Endothelial cell of umbilical vein (primary cell): ENCODE measurements at regions of chr10 and their contacts with region 1.

Region 1: DNA sequence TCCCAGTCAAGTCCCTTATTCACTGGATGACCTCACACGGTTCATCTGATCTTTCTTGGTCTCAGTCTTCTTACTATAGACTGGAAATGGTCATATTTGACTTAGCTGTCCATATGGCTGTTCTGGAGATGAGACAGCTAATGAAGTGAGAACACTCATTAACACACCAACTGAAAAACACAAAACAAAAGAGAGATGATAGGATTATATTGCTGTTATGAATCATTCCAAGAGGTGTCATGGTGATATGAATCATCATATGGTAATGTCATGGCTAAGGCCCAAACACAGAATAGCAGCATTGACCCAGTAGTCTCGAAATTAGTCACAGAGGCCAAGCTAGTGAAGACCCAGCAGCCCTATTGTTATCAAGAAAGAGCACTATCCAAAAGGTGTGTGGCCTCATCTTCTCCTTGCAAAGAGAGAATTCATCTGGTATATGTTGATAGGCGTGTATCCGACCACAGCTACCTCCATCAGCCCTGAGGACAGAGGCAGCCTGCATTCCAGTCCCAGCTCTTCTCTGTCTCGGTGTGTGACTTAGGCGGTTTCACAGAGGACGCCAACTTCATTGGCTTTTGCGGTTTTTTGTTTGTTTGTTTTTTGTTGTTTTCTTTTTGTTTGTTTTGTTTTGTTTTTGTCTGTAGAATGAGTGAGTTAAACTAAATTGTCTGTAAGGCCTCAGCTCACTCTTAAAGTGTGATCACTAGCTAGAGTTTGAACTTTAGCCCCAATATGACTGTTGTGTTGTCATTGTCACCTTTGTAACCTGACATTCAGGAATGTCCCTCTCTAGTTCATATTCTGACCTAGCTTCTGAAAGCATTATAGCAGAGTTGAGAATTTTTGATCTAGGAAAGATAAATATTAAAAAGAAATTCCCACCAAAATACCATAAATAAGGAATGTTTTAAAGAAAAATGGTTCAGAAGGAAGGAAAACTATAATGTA is 97.4 kb upstream of the PDCD4 start:
- DNase-seq: peak; percentile 62
- H3K4me3 ChIP-seq: no peak overlapping the region
- H3K27ac ChIP-seq: peak overlapping the region; percentile 9
- H3K4me1 ChIP-seq: peaks cover 6% of the 10 kb centered on the region
- H3K27me3 ChIP-seq: peaks cover 3 to 9% of the 10 kb centered on the region in 2 experiments
- CTCF ChIP-seq: no peak
- POLR2A ChIP-seq: no peak

Region 2: GRCh38 chr10:110634527-110635209 is 139.7 kb before region 1 on chr10:
- CTCF ChIA-PET with region 1: no interaction called
- POLR2A ChIA-PET with region 1: no interaction called
- dilution Hi-C with region 1: no loop called
- intact Hi-C with region 1: no loop called
- DNase-seq: no peak
- H3K4me3 ChIP-seq: no peak overlapping the region
- H3K27ac ChIP-seq: no peak overlapping the region
- H3K4me1 ChIP-seq: no peaks in the 10 kb centered on the region
- H3K27me3 ChIP-seq: peaks cover 9 to 14% of the 10 kb centered on the region in 2 experiments
- CTCF ChIP-seq: no peak
- POLR2A ChIP-seq: no peak

Region 3: DNA sequence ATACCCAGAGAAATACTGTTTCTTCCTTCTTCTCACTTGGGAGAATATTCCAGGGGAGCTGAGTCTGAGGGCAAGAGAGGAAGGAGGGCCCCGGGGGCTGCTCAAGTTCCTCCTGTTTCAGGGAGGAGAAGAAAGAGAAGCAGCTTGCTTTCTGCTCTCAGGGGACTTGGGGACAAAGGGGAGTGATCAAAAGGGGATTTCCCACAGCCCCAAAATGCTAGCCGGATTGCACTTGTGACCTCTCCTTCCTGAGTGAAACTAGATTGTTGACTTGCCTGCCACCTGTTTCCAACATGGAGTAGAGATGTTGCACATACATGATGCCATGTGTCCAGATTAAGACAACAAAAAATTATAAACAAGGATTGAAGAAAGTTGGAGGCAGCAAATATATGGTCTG is 68.7 kb after region 1 on chr10:
- CTCF ChIA-PET with region 1: no interaction called
- POLR2A ChIA-PET with region 1: no interaction called
- dilution Hi-C with region 1: no loop called
- intact Hi-C with region 1: no loop called
- DNase-seq: no peak
- H3K4me3 ChIP-seq: no peak overlapping the region
- H3K27ac ChIP-seq: no peak overlapping the region
- H3K4me1 ChIP-seq: no peaks in the 10 kb centered on the region
- H3K27me3 ChIP-seq: no peaks in the 10 kb centered on the region
- CTCF ChIP-seq: no peak
- POLR2A ChIP-seq: no peak

Region 4: GRCh38 chr10:110864662-110865140 is 90.4 kb after region 1 on chr10:
- CTCF ChIA-PET with region 1: no interaction called
- POLR2A ChIA-PET with region 1: no interaction called
- dilution Hi-C with region 1: no loop called
- intact Hi-C with region 1: loop called (anchors 5 kb)
- DNase-seq: no peak
- H3K4me3 ChIP-seq: no peak overlapping the region
- H3K27ac ChIP-seq: no peak overlapping the region
- H3K4me1 ChIP-seq: no peaks in the 10 kb centered on the region
- H3K27me3 ChIP-seq: peaks cover 8 to 13% of the 10 kb centered on the region in 2 experiments
- CTCF ChIP-seq: no peak
- POLR2A ChIP-seq: no peak